ENCODE measurements at regions of chr1 and their contacts with region 1.

Region 1: DNA sequence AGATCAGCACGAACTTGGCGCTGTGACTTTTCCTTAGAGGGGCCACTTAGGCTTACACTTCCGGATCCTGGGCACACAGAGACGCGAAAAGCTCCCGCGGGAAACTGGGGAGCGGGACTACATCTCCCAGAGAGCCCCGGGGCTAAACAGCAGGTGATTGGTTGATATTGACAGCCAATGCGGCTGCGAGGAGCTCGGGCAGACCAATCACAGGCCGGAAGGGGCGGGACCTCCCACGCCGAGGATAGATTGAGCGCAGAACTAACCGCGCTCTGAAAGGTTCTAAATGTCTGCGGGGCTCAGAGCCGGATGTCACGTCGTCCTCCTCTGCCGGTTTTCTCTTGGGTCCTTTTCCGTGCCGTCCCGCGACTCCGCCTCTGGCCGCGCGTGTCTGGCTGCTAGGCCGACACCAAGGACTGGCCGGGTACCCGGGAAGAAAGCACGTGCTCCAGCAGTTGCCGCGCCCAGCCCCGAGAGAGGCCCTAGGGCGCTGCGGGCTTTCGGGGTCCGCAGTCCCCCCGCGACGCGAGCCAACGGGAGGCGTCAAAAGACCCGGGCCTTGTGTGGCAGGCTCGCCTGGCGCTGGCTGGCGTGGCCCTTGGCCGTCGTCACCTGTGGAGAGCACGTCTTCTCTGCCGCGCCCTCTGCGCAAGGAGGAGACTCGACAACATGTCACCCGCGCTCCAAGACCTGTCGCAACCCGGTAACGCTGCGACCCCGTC is at the start of gene MTR:
- DNase-seq: peak; percentile 98
- ATAC-seq: peak; percentile 97
- H3K4me3 Mint-ChIP-seq: peak within 1 kb of the TSS; percentile 85
- H3K27ac Mint-ChIP-seq: peak within 1 kb of the TSS; percentile 92
- H3K4me1 Mint-ChIP-seq: peaks cover 29% of the 10 kb centered on the region
- H3K27me3 Mint-ChIP-seq: peaks cover 8% of the 10 kb centered on the region
- total RNA-seq, gene MTR: 41.7 to 44.7 TPM

Region 2: DNA sequence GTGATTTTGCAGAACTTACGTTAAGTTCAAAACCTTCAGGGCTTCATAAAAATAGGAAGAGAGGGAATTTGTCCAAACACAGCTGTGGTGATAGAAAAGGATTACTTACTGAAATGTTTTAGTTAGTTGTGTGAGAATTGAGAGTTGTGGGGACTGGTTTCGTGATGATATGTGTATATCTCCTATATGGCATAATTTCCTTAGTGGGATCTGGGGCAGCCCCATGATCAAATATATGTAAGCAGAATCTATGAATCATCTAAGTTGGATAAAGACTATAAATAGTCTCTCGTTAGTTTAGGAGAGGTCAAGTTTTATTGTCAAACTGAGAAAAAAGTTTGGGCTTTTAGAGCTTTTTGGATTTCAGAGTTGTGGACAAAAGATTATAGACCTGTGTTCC is 14.8 kb after region 1 on chr1:
- CTCF ChIA-PET with region 1: interaction called, 12 read pairs
- POLR2A ChIA-PET with region 1: interaction called, 6 read pairs
- DNase-seq: no peak
- ATAC-seq: no peak
- H3K4me3 Mint-ChIP-seq: no peak overlapping the region
- H3K27ac Mint-ChIP-seq: no peak overlapping the region
- H3K4me1 Mint-ChIP-seq: no peaks in the 10 kb centered on the region
- H3K27me3 Mint-ChIP-seq: no peaks in the 10 kb centered on the region

Measured in activated CD8-positive, alpha-beta T cell treated with anti-CD3 and anti-CD28 coated beads, Interleukin-2, amount 10 ng/mL, durations not matched to agents 7 days and 5 days (primary cell).